Activated CD4-positive, alpha-beta T cell treated with anti-CD3 and anti-CD28 coated beads, Interleukin-2, amount 10 ng/mL, durations not matched to agents 7 days and 5 days (primary cell): ENCODE measurements at regions of chr14 and their contacts with region 1.

Region 1: GRCh38 chr14:65184032-65184764 is 81.9 kb upstream of the MAX start:
- DNase-seq: no peak
- H3K4me3 Mint-ChIP-seq: no peak overlapping the region
- H3K27ac Mint-ChIP-seq: no peak overlapping the region
- H3K4me1 Mint-ChIP-seq: peaks cover 11% of the 10 kb centered on the region
- H3K27me3 Mint-ChIP-seq: peaks cover 1% of the 10 kb centered on the region

Region 2: DNA sequence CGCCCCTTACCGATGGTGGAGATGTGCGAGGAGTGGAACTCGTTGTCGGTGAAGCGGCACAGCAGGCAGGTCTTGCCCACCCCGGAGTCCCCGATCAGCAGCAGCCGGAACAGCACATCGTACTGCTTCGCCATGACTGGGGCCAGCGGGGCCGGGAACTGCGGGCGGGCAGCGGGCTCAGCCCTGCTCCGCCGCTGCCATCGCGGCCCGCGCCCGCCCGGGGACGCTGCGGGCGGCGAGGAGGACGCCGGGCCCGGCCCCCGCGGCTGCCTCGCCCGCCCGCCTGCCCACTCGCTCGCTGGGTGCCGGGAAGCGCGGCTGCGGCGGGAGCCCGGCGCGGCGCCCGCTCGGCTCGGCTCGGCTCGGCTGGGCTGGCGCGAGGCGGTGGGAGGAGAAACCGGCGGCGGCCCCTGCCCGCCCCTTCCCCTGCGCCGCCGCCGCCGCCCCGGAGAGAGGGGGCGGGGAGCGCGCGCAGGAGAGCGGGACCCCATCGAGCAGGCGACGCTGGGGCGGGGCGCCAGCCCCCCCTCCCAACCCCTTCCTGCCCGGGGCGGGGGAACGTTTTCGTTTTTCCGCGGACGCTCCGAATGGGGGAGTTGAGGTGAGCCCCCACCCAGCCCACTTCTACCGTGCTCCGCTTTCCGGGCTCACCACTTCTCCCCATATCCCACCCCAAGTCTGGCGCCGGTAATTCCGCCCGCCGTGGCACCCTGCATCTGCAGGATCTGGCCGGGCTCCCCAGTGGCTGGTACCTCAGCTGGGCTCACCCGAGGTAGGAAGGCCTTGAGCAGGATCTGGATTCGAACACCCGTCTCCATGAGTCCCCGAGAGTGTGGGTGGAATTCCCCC is 212.0 kb before region 1 on chr14 and contains the start of gene RAB15:
- CTCF ChIA-PET with region 1: no interaction called
- POLR2A ChIA-PET with region 1: no interaction called
- DNase-seq: peak; percentile 39
- H3K4me3 Mint-ChIP-seq: peak within 1 kb of the TSS; percentile 78
- H3K27ac Mint-ChIP-seq: peak within 1 kb of the TSS; percentile 73
- H3K4me1 Mint-ChIP-seq: peaks cover 13% of the 10 kb centered on the region
- H3K27me3 Mint-ChIP-seq: peaks cover 7% of the 10 kb centered on the region
- total RNA-seq, gene RAB15: 4.9 to 5.7 TPM

Region 3: DNA sequence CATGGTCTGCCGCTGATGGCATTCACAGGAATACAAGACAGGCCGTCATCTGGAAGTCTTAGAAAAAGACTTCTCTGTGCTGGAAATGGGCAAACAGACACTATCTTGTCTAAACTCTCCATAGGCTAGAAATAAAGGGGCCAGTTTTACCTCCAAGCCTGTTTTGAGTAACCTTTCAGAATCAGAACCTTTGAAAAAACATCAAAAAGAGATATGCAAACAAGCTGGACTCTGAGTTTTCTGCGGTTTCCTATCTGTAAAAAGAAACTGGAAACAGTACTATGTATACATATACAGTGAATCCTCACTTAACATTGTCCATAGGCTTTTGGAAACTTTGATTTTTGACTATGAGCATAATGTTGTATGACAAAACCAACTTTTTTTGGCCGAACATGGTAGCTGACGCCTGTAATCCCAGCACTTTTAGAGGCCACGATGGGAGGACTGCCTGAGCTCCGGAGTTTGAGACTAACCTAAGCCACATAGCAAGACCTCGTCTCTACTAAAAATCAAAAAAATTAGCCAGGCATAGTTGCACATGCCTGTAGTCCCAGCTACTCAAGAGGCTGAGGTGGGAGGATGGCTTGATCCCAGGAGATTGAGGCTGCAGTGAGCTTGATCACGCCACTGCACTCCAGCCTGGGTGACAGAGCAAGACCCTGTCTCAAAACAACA is 11.0 kb after region 1 on chr14:
- CTCF ChIA-PET with region 1: interaction called, 13 read pairs
- POLR2A ChIA-PET with region 1: no interaction called
- DNase-seq: no peak
- H3K4me3 Mint-ChIP-seq: no peak overlapping the region
- H3K27ac Mint-ChIP-seq: no peak overlapping the region
- H3K4me1 Mint-ChIP-seq: peaks cover 8% of the 10 kb centered on the region
- H3K27me3 Mint-ChIP-seq: no peaks in the 10 kb centered on the region

Region 4: DNA sequence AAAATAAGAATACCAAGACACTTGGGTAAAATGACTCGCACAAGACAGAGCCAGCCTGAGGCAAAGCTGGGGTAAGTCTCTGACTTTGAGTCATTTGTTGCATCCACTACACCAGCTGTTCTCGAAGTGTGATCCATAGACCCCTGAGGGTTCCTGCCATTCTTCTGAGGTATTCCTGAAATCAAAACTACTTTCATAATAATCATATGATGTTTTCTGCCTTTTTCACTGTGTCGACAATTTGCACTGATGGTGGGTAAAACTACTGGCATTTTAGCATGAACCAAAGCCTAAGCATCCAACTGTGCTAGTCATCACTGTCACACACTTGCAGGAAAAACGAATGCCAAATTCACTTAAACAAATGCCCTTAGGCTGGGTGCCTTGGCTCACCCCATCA is 92.8 kb after region 1 on chr14:
- CTCF ChIA-PET with region 1: no interaction called
- POLR2A ChIA-PET with region 1: no interaction called
- DNase-seq: no peak
- H3K4me3 Mint-ChIP-seq: no peak overlapping the region
- H3K27ac Mint-ChIP-seq: no peak overlapping the region
- H3K4me1 Mint-ChIP-seq: peaks cover 5% of the 10 kb centered on the region
- H3K27me3 Mint-ChIP-seq: no peaks in the 10 kb centered on the region

Region 5: DNA sequence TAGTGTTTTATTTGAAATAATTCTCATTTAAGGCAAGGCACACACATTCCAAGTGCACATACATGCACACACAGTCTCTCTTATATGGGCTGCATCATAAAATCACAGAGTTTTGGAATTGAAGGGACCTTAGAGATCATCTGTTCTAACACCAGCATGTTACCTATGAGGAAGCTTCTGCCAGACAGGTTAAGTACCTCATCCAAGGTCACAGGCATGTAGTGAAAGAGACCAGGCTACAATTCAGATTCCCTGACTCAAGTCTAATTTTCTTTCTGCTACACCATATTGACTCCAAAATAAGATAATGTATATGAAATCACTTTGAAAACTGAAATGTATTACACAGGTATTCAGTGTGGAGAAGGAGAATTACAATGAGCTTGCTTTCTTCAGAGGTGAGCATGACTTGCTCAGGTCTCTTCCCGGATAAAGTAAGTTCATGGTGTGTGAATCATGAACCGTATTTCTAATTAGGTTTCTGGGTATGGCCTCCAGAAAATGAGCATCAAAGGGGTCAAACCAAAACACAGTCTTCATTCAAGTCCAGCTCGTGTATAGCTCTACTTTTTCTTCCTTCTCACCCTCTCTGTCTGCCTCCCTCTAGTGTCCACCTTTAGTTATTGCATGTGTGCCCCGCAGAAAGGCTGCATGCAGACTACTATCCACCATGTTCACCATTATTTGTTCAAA is 640.2 kb after region 1 on chr14:
- CTCF ChIA-PET with region 1: interaction called, 10 read pairs
- POLR2A ChIA-PET with region 1: no interaction called
- DNase-seq: peak; percentile 72
- H3K4me3 Mint-ChIP-seq: no peak overlapping the region
- H3K27ac Mint-ChIP-seq: no peak overlapping the region
- H3K4me1 Mint-ChIP-seq: peaks cover 29% of the 10 kb centered on the region
- H3K27me3 Mint-ChIP-seq: peaks cover 3% of the 10 kb centered on the region